Activated CD4-positive, alpha-beta T cell treated with anti-CD3 and anti-CD28 coated beads, Interleukin-2, amount 10 ng/mL, durations not matched to agents 24 days and 14 days (primary cell): ENCODE measurements at regions of chr19 and their contacts with region 1.

Region 1: GRCh38 chr19:52637718-52638585 is at the start of gene ZNF83:
- DNase-seq: peak; percentile 98
- H3K4me3 Mint-ChIP-seq: peak within 1 kb of the TSS; percentile 97
- H3K27ac Mint-ChIP-seq: peak within 1 kb of the TSS; percentile 98
- H3K4me1 Mint-ChIP-seq: peaks cover 11% of the 10 kb centered on the region
- H3K27me3 Mint-ChIP-seq: no peaks in the 10 kb centered on the region
- total RNA-seq, gene ZNF83: 22.1 and 26.3 TPM in 2 replicates

Region 2: GRCh38 chr19:52296773-52297600 is 341.0 kb before region 1 on chr19 and contains the start of gene ZNF480:
- intact Hi-C with region 1: loop called (anchors 10 kb)
- DNase-seq: peak; percentile 95
- H3K4me3 Mint-ChIP-seq: peak within 1 kb of the TSS; percentile 83
- H3K27ac Mint-ChIP-seq: peak within 1 kb of the TSS; percentile 98
- H3K4me1 Mint-ChIP-seq: peaks cover 17% of the 10 kb centered on the region
- H3K27me3 Mint-ChIP-seq: peaks cover 5% of the 10 kb centered on the region
- total RNA-seq, gene ZNF480: 4.2 and 5.0 TPM in 2 replicates

Region 3: DNA sequence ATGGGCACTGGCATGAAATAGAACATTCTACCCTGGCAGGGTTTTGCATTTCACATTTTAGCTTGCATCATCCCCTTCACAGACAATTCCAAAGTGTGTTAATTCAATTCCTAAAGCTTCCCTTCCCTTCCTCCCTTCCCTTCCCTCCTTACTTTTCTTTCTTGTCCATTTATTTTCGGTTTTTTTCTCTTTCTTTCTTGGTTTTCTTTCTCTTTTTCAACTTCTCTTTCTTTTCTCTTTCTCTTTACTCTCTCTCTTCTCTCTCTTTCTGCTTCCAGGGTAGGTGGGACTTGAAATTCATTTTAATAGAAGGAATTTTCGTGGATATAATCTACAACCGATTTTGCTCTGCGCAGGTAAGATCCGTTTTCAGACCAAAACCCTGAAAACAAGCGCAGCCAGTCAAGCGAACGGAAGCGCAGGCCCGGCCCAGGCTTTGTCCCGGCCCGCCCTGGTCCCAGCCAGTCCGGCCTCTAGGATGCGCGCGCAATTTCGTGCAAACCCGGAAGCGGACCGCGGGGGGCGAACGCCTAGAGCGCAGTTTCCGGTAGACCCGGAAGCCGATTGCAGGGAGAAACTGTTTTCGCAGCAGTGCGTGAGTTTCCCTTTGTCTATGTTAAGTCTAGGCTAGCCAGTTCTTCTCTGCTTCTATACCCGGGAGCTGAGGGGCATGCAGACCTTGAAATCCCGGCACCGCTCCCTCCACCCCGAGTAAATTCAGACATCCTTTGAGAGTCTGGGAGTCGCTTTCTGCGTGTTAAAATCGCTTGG is 240.5 kb before region 1 on chr19 and contains the start of gene ZNF528:
- intact Hi-C with region 1: loop called (anchors 1 kb)
- DNase-seq: peak; percentile 97
- H3K4me3 Mint-ChIP-seq: peak within 1 kb of the TSS; percentile 92
- H3K27ac Mint-ChIP-seq: peak within 1 kb of the TSS; percentile 85
- H3K4me1 Mint-ChIP-seq: peaks cover 16% of the 10 kb centered on the region
- H3K27me3 Mint-ChIP-seq: no peaks in the 10 kb centered on the region
- total RNA-seq, gene ZNF528: 5.7 and 7.9 TPM in 2 replicates

Region 4: GRCh38 chr19:52570000-52570861 is 67.7 kb before region 1 on chr19 and contains the start of gene ZNF701:
- intact Hi-C with region 1: loop called (anchors 1 kb)
- DNase-seq: peak; percentile 99
- H3K4me3 Mint-ChIP-seq: peak within 1 kb of the TSS; percentile 88
- H3K27ac Mint-ChIP-seq: peak within 1 kb of the TSS; percentile 89
- H3K4me1 Mint-ChIP-seq: peaks cover 23% of the 10 kb centered on the region
- H3K27me3 Mint-ChIP-seq: no peaks in the 10 kb centered on the region
- total RNA-seq, gene ZNF701: 19.3 and 21.0 TPM in 2 replicates

Region 5: DNA sequence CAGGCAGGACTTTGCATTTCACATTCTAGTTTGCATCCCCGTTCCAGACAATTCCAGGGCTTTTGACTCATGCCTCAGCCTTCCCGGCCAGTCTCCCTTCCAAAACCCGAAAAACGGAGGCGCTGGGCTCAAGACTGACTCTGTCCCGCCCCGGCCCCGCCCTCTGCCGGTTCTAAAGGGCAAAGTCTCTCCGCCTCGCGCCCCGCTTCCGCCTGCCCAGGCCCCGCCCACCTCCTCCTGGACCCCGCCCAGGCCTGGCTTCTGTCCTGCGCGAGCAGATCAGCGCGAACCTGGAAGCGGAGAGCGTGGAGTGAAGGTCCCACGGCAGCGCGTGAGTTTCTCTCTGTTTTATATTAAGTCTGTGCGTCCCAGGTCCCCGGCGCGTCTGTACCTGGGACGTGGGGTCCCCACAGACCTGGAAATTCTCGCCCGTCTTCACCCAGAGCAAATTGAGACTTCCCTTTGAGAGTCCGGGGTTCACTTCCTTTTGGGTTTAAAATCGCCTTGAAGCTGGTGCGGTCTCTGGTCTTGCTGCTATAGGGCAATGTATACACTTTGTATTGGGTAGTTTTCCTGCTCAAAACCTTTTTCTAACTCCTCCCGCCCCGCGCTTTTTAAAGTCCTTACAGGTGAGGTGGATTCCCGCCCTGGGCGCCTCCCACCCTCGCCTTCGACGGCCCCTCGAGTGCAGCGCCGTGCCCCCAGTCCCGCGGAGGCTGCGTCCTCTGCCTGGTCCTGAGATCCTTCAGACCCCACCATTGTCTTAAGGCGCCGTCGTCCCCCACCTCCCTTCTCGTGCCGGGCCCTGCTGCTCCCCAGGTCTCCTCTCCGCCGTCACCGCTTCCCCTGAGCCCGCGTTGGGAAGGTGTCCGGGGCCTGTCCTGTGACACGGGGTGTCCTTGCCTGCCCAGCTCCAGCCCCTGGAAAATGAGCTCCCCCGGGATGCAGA is 36.7 kb before region 1 on chr19:
- intact Hi-C with region 1: loop called (anchors 1 kb)
- DNase-seq: peak; percentile 98
- H3K4me3 Mint-ChIP-seq: peak overlapping the region; percentile 89
- H3K27ac Mint-ChIP-seq: peak overlapping the region; percentile 73
- H3K4me1 Mint-ChIP-seq: peaks cover 12% of the 10 kb centered on the region
- H3K27me3 Mint-ChIP-seq: no peaks in the 10 kb centered on the region

Region 6: GRCh38 chr19:52622261-52622660 is 15.7 kb before region 1 on chr19:
- intact Hi-C with region 1: no loop called
- DNase-seq: no peak
- H3K4me3 Mint-ChIP-seq: no peak overlapping the region
- H3K27ac Mint-ChIP-seq: no peak overlapping the region
- H3K4me1 Mint-ChIP-seq: peaks cover 2% of the 10 kb centered on the region
- H3K27me3 Mint-ChIP-seq: no peaks in the 10 kb centered on the region

Region 7: DNA sequence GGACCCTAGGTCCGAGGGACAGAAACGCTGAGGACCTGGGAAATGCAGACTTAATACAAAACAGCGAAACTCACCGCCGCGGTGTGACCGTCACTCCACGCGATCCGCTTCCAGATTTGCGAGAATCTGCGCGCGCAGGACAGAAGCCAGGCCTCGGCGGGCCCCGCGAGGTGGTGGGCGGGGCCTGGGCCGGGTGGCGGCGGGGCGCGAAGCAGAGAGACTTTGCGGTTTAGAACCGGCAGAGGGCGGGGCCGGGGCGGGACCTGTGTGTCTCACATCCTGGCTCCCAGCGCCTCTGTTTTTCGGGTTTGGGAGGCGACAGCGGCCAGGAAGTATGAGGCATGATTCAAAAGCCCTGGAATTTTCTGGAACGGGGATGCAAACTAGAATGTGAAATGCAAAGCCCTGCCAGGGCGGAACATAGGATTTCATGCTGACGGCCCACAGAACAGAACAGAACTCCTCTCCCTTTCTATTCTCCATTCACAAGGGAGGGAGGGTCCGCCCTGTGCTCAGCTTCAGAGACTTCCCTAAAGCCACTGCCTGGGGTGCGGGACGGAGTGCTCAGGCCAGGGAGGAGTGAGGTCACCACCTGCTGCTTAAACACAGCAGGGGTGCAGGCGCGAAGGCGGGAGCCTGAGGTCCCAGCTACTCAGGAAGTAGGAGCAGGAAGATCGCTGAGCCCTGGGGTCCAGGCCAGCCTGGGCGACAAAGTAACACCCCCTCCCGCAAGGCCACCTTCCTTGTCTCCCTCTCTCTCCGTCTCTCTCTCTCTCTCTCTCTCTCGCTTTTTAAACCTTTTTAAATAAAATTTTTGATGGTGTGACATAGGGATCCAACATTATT is 52.6 kb after region 1 on chr19:
- intact Hi-C with region 1: loop called (anchors 1 kb)
- DNase-seq: peak; percentile 97
- H3K4me3 Mint-ChIP-seq: peak overlapping the region; percentile 94
- H3K27ac Mint-ChIP-seq: peak overlapping the region; percentile 91
- H3K4me1 Mint-ChIP-seq: peaks cover 22% of the 10 kb centered on the region
- H3K27me3 Mint-ChIP-seq: no peaks in the 10 kb centered on the region

Region 8: GRCh38 chr19:52722062-52723003 is 84.4 kb after region 1 on chr19:
- intact Hi-C with region 1: no loop called
- DNase-seq: no peak
- H3K4me3 Mint-ChIP-seq: no peak overlapping the region
- H3K27ac Mint-ChIP-seq: no peak overlapping the region
- H3K4me1 Mint-ChIP-seq: no peaks in the 10 kb centered on the region
- H3K27me3 Mint-ChIP-seq: no peaks in the 10 kb centered on the region

Region 9: GRCh38 chr19:52922841-52923777 is 285.2 kb after region 1 on chr19 and contains the start of gene ZNF888:
- intact Hi-C with region 1: loop called (anchors 2 kb)
- DNase-seq: peak; percentile 95
- H3K4me3 Mint-ChIP-seq: peak within 1 kb of the TSS; percentile 89
- H3K27ac Mint-ChIP-seq: peak within 1 kb of the TSS; percentile 96
- H3K4me1 Mint-ChIP-seq: peaks cover 19% of the 10 kb centered on the region
- H3K27me3 Mint-ChIP-seq: no peaks in the 10 kb centered on the region
- total RNA-seq, gene ZNF888: 4.4 and 6.5 TPM in 2 replicates